ENCODE measurements at regions of chr3 and their contacts with region 1.

Region 1: DNA sequence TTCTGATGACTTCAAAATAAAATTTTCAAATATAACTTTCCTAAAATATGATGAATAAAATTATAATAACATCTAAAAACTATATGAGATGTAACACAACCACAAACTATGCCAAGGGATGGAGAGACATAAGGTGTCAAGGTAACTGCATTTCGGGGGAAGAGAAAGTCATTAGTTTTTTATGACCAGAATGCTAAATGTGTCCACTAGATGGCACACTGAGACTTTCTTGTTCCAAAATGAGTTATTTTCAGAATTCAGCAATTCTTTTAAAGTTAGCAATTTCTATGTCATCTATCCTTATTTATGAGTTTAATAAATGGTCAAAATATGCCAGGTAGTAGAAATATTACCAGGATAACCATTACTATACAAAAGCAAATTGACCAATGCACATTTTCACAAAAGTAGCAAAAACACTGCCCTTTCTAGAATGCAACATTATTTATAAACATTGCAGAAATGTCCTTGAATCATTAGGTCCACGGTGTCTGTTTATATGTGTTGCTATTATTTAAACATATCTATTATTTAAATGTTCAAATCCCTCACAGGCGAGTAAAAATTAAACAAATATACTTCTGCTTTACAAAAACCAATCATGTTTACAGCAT is 374.2 kb downstream of the PLCL2 start:
- DNase-seq: peak; percentile 47
- H3K4me3 ChIP-seq: no peak overlapping the region
- H3K27ac ChIP-seq: no peak overlapping the region
- H3K4me1 ChIP-seq: no peaks in the 10 kb centered on the region
- H3K27me3 ChIP-seq: no peaks in the 10 kb centered on the region
- CTCF ChIP-seq: peak; percentile 75

Region 2: GRCh38 chr3:16707260-16707659 is 551.7 kb before region 1 on chr3:
- CTCF ChIA-PET with region 1: no interaction called
- POLR2A ChIA-PET with region 1: no interaction called
- intact Hi-C with region 1: no loop called
- DNase-seq: no peak
- H3K4me3 ChIP-seq: no peak overlapping the region
- H3K27ac ChIP-seq: no peak overlapping the region
- H3K4me1 ChIP-seq: no peaks in the 10 kb centered on the region
- H3K27me3 ChIP-seq: peaks cover 8% of the 10 kb centered on the region
- CTCF ChIP-seq: no peak

Region 3: DNA sequence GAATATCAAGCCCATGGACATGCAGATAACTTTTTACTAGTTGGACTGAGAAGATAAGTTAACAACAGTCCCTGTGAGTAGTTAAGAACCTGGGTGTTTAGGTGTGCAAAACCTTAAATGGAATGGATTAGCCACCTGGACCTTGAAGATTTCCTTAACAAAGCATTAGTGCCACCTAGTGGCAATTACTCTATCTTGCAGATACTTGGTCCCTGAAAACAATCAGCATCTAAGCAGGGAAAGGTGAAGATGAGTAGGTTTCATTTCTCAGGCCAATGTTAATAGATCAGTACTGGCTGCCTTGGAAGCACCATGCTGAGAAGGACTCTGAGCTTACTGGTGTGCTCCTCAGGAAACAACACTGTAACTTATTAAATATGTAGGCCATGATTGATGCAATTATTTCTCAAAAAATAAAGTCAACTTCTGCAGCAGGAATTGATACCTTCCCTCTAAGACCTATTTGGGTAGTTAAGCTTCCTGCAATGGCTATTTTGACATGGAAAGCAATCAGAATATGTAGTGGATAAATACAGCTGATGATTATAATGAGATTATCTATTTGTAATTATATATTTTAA is 154.1 kb after region 1 on chr3:
- CTCF ChIA-PET with region 1: no interaction called
- POLR2A ChIA-PET with region 1: no interaction called
- intact Hi-C with region 1: loop called (anchors 1 kb)
- DNase-seq: peak; percentile 60
- H3K4me3 ChIP-seq: no peak overlapping the region
- H3K27ac ChIP-seq: no peak overlapping the region
- H3K4me1 ChIP-seq: no peaks in the 10 kb centered on the region
- H3K27me3 ChIP-seq: no peaks in the 10 kb centered on the region
- CTCF ChIP-seq: peak; percentile 79